Stomach (tissue), 19 donors: ENCODE measurements at regions of chr1 and their contacts with region 1.

Region 1: GRCh38 chr1:67489643-67490042 is 59.4 kb upstream of the SERBP1 start:
- DNase-seq: peak in 1 of 2 donors; percentile 76
- H3K4me3 ChIP-seq: no peak overlapping the region
- H3K27ac ChIP-seq: no peak overlapping the region
- H3K4me1 ChIP-seq: no peaks in the 10 kb centered on the region
- H3K27me3 ChIP-seq: no peaks in the 10 kb centered on the region
- CTCF ChIP-seq: peak in 3 of 7 experiments; percentile 15 to 43 (median 17)
- EP300 ChIP-seq: no peak
- POLR2A ChIP-seq: no peak

Region 2: DNA sequence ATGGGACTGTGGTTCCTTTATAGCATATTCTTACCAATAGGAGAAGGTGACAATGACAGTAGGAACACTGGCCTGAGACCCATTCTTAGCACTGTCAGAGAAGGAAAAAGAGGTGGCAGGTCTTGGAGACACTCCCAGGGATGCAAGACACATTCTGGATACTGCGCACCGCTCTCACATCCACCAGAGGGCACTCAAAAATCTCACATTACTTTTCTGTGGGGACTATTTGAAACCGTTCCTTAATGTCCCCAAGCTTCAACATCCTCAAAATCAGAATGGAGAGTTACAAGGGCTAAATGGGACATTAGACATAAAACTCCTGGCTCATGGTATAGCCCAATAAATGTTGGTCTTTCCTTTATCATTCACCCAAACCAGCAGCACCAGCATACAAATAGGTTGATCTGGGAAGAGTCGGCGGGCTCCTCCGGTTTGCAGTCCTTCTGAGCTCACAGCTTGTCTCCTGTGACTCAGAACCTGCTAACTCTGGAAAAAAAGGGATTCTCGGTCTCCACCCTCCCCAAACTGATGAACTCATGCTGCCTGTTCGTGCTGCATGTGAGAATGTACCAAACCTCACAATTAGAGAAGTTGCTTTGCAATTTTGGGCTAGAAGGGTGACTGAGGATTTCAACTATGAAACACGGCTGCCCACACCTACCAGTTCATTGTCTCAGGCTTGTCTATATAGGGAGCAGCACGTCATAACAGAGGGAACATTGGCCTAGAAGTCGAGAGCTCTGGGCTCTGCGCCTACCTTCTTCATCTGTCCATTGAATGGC is 141.8 kb before region 1 on chr1:
- intact Hi-C with region 1: loop called (anchors 5 kb)
- DNase-seq: peak; percentile 41 to 75
- H3K4me3 ChIP-seq: no peak overlapping the region
- H3K27ac ChIP-seq: no peak overlapping the region
- H3K4me1 ChIP-seq: no peaks in the 10 kb centered on the region
- H3K27me3 ChIP-seq: no peaks in the 10 kb centered on the region
- CTCF ChIP-seq: peak in 5 of 7 experiments; percentile 48 to 74 (median 68)
- EP300 ChIP-seq: no peak
- POLR2A ChIP-seq: no peak